B cell (primary cell): ENCODE measurements at regions of chr17 and their contacts with region 1.

Region 1: GRCh38 chr17:31508288-31509094 is 117.0 kb downstream of the RAB11FIP4 start:
- DNase-seq: peak; percentile 79
- ATAC-seq: peak; percentile 81
- H3K4me3 ChIP-seq: peak overlapping the region; percentile 24 to 65 (median 38)
- H3K4me3 Mint-ChIP-seq: peak overlapping the region; percentile 94
- H3K27ac ChIP-seq: peak overlapping the region; percentile 83 to 89
- H3K27ac Mint-ChIP-seq: peak overlapping the region; percentile 96
- H3K4me1 ChIP-seq: peaks cover 49 to 56% of the 10 kb centered on the region in 2 donors
- H3K4me1 Mint-ChIP-seq: peaks cover 61% of the 10 kb centered on the region
- H3K27me3 ChIP-seq: no peaks in the 10 kb centered on the region
- H3K27me3 Mint-ChIP-seq: no peaks in the 10 kb centered on the region
- CTCF ChIP-seq: peak; percentile 67

Region 2: DNA sequence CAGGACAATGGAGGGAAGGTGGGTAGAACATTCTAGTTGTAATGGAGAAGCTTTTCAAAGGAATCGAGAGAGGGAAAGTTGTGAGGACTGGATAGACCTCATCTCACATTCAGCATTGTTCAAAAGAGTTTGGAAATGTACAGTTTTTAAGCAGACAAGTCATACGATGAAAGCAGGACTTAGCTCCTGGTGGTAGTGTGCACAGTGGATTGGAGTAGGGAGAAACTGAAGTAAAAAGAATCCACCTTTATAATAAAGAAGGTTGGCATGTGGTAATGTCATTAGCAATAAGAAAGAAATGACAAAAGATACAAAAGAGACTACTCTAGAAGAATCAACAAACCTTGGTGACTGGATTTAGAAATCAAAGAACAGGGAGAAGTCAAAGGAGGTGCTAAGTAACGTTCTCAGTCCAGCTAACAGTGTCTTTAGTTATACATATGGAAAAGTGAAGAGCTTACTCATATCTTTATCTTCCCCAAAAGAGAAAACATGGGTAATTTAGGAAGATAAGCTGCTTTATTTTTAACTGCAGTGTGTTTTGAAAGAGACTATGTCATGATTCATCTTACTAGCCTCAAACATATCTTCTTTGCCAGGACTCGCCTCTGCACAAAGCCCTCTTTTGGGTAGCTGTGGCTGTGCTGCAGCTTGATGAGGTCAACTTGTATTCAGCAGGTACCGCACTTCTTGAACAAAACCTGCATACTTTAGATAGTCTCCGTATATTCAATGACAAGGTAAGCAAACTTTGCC is 168.4 kb before region 1 on chr17:
- CTCF ChIA-PET with region 1: no interaction called
- POLR2A ChIA-PET with region 1: no interaction called
- intact Hi-C with region 1: no loop called
- DNase-seq: no peak
- ATAC-seq: no peak
- H3K4me3 ChIP-seq: no peak overlapping the region
- H3K4me3 Mint-ChIP-seq: no peak overlapping the region
- H3K27ac ChIP-seq: no peak overlapping the region
- H3K27ac Mint-ChIP-seq: no peak overlapping the region
- H3K4me1 ChIP-seq: no peaks in the 10 kb centered on the region
- H3K4me1 Mint-ChIP-seq: no peaks in the 10 kb centered on the region
- H3K27me3 ChIP-seq: no peaks in the 10 kb centered on the region
- H3K27me3 Mint-ChIP-seq: no peaks in the 10 kb centered on the region
- CTCF ChIP-seq: no peak

Region 3: GRCh38 chr17:31404028-31404954 is 104.2 kb before region 1 on chr17:
- CTCF ChIA-PET with region 1: no interaction called
- POLR2A ChIA-PET with region 1: no interaction called
- intact Hi-C with region 1: no loop called
- DNase-seq: no peak
- ATAC-seq: no peak
- H3K4me3 ChIP-seq: no peak overlapping the region
- H3K4me3 Mint-ChIP-seq: no peak overlapping the region
- H3K27ac ChIP-seq: no peak overlapping the region
- H3K27ac Mint-ChIP-seq: no peak overlapping the region
- H3K4me1 ChIP-seq: no peaks in the 10 kb centered on the region
- H3K4me1 Mint-ChIP-seq: no peaks in the 10 kb centered on the region
- H3K27me3 ChIP-seq: no peaks in the 10 kb centered on the region
- H3K27me3 Mint-ChIP-seq: peaks cover 16% of the 10 kb centered on the region
- CTCF ChIP-seq: no peak

Region 4: DNA sequence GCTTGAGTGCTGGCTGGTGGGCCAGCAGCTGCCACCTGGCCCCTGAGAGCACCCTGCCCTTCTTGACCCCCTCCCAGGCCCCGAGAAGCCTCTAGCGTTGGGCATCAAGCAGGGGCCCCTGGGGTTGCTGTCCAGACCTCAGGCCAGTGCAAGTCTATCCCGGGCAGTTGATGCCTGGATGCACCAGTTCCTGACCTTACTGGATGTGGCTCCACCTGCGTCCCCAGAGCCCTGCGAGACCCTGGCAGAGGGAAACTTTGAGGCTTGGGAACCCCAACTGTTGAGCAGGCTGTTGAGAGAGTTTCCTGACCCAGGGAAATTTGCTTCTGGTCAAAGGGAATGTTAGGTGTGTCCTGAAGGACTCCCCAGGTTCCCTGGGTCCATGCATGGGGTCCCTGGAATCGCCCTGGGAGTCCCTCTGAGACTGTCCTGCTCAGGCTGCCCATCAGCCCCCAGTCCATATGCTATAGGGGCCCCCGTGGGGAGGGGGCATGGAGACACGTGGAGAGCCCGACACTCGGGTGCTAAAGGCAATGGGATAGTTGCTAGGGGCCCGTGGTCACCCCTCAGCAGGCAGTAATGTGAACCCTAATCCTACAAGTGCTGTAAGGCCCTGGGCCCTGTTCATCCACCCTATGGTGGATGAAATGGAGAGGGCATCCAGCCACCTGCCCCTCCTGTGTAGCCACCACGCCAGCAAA is 70.6 kb before region 1 on chr17:
- CTCF ChIA-PET with region 1: interaction called, 65 read pairs
- POLR2A ChIA-PET with region 1: no interaction called
- intact Hi-C with region 1: loop called (anchors 1 kb)
- DNase-seq: no peak
- ATAC-seq: no peak
- H3K4me3 ChIP-seq: no peak overlapping the region
- H3K4me3 Mint-ChIP-seq: no peak overlapping the region
- H3K27ac ChIP-seq: no peak overlapping the region
- H3K27ac Mint-ChIP-seq: no peak overlapping the region
- H3K4me1 ChIP-seq: peaks cover 3 to 11% of the 10 kb centered on the region in 2 donors
- H3K4me1 Mint-ChIP-seq: peaks cover 7% of the 10 kb centered on the region
- H3K27me3 ChIP-seq: peaks cover 0 to 5% (median 0%) of the 10 kb centered on the region in 4 experiments
- H3K27me3 Mint-ChIP-seq: no peaks in the 10 kb centered on the region
- CTCF ChIP-seq: no peak

Region 5: DNA sequence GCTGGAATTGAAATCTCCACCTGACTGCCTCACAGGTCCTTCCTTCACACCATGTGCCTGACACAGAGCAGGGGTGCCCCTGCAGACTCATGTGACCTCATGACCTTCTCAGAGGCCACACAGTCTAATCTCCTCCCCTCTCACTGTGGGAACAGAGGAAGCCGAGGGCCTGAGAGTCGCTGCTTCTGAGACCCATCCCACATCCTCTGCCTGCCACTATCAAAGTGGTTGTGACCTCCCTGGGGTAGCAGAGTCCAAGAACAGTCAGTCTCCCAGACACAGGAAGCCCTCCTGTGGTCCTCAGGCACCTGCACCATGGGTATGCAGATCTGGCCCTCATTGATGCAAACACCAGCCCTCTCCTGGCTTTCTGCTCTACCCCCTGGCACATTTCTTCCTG is 38.5 kb before region 1 on chr17:
- CTCF ChIA-PET with region 1: no interaction called
- POLR2A ChIA-PET with region 1: no interaction called
- intact Hi-C with region 1: loop called (anchors 5 kb)
- DNase-seq: no peak
- ATAC-seq: no peak
- H3K4me3 ChIP-seq: no peak overlapping the region
- H3K4me3 Mint-ChIP-seq: no peak overlapping the region
- H3K27ac ChIP-seq: no peak overlapping the region
- H3K27ac Mint-ChIP-seq: no peak overlapping the region
- H3K4me1 ChIP-seq: peaks cover 0 to 7% of the 10 kb centered on the region in 2 donors
- H3K4me1 Mint-ChIP-seq: no peaks in the 10 kb centered on the region
- H3K27me3 ChIP-seq: peaks cover 0 to 4% (median 0%) of the 10 kb centered on the region in 4 experiments
- H3K27me3 Mint-ChIP-seq: no peaks in the 10 kb centered on the region
- CTCF ChIP-seq: no peak

Region 6: DNA sequence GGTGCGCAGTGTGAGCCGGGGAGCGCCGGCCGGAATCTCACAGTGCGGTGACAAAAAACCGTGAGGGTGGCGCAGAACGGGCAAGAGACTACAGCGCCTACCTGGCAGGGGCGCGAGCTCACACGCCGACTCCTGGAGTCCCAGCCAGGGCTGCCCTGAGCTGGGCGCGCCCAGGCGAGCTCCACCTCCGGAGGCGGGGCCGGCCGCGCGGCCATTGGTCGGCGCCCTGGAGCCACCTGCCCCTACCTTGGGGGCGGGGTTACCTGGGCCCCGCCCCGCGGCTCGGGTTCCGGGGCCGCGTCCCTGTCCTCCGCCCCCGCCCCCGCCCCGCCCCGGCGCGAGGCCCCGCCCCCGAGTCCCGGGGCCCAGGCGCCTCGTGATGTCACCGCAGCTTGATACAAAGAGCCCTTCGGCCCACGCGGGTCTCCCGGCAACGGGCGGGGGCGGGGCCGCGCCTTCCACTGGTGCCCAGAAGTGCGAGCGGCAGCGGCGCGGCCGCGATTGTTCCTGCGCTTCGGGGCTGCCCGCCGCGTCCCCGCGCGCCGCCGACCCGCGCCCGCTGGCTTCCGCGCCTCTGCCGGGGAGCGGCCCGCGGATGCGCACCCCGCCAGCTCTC is 20.7 kb before region 1 on chr17:
- CTCF ChIA-PET with region 1: interaction called, 94 read pairs
- POLR2A ChIA-PET with region 1: interaction called, 34 read pairs
- intact Hi-C with region 1: no loop called
- DNase-seq: peak; percentile 96
- ATAC-seq: peak; percentile 85
- H3K4me3 ChIP-seq: peak overlapping the region in 4 of 5 experiments; percentile 74 to 84 (median 82)
- H3K4me3 Mint-ChIP-seq: peak overlapping the region; percentile 94
- H3K27ac ChIP-seq: peak overlapping the region; percentile 65 to 90
- H3K27ac Mint-ChIP-seq: peak overlapping the region; percentile 95
- H3K4me1 ChIP-seq: peaks cover 49 to 54% of the 10 kb centered on the region in 2 donors
- H3K4me1 Mint-ChIP-seq: peaks cover 52% of the 10 kb centered on the region
- H3K27me3 ChIP-seq: no peaks in the 10 kb centered on the region
- H3K27me3 Mint-ChIP-seq: no peaks in the 10 kb centered on the region
- CTCF ChIP-seq: peak; percentile 11